Heart left ventricle (tissue), 16 donors: ENCODE measurements at regions of chr3 and their contacts with region 1.

Region 1: GRCh38 chr3:89974903-89975519 is 867.6 kb downstream of the EPHA3 start:
- DNase-seq: no peak
- ATAC-seq: no peak
- H3K4me3 ChIP-seq: no peak overlapping the region
- H3K27ac ChIP-seq: no peak overlapping the region
- H3K4me1 ChIP-seq: no peaks in the 10 kb centered on the region
- H3K27me3 ChIP-seq: no peaks in the 10 kb centered on the region
- CTCF ChIP-seq: no peak
- POLR2A ChIP-seq: no peak

Region 2: DNA sequence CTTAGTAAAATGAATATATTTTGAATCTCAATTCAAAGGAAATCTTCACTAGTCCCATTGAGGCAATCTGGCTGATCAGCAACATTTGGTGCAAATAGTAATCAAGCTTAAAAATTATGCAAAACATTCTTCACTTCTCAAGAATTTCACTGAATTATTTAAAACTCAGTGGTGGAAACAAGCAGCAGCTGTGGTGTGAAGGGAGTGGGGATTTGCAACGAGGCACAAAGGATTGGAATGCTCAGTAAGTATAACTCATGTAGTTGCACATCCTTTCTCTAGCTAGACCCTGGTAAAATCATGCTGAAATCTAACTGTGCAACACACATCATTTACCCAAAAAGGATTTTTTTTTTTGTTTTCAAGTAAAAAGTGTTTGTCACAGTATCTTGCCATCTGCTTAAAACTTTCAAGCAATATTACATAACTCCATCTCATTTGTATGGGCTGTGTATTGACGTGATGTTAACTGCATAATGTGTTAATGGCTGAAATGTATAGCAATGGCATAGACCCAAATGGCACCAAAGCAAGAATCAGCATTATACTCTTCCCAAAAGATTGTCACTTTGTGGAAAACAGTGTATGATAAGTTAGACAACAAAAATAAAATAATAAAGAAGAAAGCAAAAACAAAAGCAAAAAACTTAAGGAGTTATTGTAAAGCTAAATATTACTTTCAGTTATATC is 50.9 kb before region 1 on chr3:
- intact Hi-C with region 1: loop called in 1 of 10 experiments (anchors 10 kb)
- DNase-seq: no peak
- ATAC-seq: no peak
- H3K4me3 ChIP-seq: no peak overlapping the region
- H3K27ac ChIP-seq: no peak overlapping the region
- H3K4me1 ChIP-seq: no peaks in the 10 kb centered on the region
- H3K27me3 ChIP-seq: no peaks in the 10 kb centered on the region
- CTCF ChIP-seq: no peak
- POLR2A ChIP-seq: no peak

Region 3: DNA sequence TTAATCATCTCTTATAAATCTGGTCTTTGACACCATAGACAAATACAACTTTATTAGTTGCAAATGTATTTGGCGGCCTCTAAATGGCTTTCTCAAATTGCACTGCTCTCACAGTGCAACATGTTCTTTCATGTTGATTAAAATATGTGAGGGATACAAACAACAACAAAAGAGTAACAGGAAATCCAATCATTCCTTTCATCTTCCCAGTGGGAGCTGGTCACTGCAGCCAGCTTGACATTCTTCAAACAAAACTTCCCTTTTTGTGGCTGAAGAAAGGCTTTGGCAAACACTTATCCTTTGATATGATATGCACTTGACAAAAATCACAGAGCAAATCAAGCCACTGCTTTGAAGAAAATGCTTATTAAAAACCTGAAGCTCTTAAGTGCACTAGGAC is 106.0 kb after region 1 on chr3:
- intact Hi-C with region 1: no loop called
- DNase-seq: no peak
- ATAC-seq: no peak
- H3K4me3 ChIP-seq: no peak overlapping the region
- H3K27ac ChIP-seq: no peak overlapping the region
- H3K4me1 ChIP-seq: no peaks in the 10 kb centered on the region
- H3K27me3 ChIP-seq: no peaks in the 10 kb centered on the region
- CTCF ChIP-seq: no peak
- POLR2A ChIP-seq: no peak